OCI-LY7 (cell line): ENCODE measurements at regions of chr6 and their contacts with region 1.

Region 1: DNA sequence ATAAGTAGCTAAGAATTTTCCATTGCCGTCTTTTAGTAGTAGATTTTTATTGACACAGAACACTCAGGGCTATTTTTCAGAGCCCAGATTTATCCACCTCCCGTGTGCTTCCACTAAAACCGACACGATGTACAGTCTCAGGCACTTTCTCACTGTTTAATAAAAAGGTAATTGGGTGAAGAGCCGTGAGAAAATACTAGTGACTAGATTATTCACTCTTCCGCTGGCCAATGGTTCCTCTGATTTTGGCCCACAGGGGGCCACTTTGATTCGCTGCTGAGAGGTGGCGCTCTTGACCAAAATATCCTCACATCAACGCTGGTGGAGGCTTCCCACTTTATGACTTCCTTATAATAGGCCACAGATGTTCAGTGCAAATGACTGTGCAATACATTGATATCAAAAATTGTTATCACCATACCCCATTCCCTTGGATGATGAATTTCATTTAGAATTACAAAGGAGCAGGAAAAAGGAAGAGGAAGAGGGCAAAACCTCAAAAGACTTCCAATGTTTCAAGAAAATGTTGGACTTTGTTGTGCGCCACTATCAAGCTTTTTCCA is 12.3 kb upstream of the HDDC2 start:
- DNase-seq: peak; percentile 77
- H3K4me3 ChIP-seq: no peak overlapping the region
- H3K27ac ChIP-seq: no peak overlapping the region
- H3K4me1 ChIP-seq: no peaks in the 10 kb centered on the region
- CTCF ChIP-seq: peak; percentile 98

Region 2: DNA sequence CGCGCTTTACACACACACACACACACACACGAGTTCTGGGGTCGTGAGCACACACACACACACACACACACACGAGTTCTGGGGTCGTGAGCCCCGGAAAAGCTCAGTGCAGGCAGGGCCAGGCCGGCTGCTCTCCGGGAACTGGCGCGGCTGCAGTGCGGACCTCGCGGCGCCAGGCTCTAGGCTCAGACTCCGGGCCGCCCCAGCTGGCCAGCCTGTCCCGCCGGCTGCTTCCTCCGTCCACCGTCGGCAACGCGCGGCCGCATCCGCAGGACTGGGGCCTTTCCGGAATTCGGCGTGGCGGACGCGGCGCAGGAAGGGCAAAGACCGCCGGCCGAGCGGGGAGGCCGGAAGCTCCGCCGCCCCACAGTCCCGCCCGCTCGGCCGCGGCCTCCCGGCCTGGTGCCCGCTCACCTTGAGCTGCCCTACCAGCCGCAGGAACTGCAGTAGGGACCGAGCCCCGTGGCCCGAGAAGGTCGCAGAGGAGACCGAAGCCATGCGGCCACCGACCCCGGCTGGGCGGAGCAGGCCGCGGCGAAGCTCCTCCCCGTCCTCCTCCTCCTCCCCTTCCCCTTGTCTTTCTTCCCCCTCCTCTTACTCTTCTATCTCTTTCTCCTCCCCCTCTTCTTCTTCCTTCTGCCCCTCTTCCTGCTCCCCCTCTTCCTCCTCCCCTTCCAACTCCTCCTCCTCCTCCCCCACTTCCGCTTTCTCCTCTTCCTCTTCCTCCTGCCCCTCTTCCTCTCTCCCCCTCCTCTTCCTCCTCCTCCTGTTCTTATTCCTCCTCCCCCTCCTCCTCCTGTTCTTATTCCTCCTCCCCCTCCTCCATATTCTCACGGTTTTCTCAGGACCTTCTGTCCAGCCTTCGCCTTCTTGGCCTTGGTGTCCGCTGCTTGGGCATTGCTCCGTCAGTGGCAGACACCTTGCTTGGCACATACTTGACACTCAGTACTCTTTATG is 12.4 kb before region 1 on chr6 and contains the start of gene HDDC2:
- CTCF ChIA-PET with region 1: no interaction called
- POLR2A ChIA-PET with region 1: interaction called, 10 read pairs
- intact Hi-C with region 1: no loop called
- DNase-seq: peak; percentile 71
- H3K4me3 ChIP-seq: peak within 1 kb of the TSS; percentile 83
- H3K27ac ChIP-seq: peak within 1 kb of the TSS; percentile 52
- H3K4me1 ChIP-seq: peaks cover 29% of the 10 kb centered on the region
- CTCF ChIP-seq: no peak
- total RNA-seq, gene HDDC2: 75.1 and 88.6 TPM in 2 replicates

Region 3: DNA sequence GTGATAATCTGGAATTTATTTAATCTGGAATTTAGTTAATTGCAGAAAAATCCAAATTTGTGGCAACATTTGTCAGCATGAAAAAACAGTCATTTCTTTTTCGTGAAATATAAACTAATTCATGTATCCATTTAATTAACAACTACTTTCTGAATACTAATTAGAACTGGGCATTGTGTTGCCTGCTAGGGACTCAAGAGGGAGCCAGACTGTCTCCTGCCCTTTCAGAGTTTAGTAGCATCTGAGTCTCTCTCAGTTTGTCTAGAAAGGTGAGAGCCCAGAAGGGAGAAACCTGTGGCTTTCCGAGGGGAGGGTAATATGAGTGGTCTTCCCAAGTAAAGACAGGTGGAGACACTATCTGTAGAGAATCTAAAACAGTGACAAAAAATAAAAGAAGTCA is 198.5 kb after region 1 on chr6:
- CTCF ChIA-PET with region 1: no interaction called
- POLR2A ChIA-PET with region 1: no interaction called
- intact Hi-C with region 1: loop called (anchors 5 kb)
- DNase-seq: peak; percentile 23
- H3K4me3 ChIP-seq: no peak overlapping the region
- H3K27ac ChIP-seq: no peak overlapping the region
- H3K4me1 ChIP-seq: no peaks in the 10 kb centered on the region
- CTCF ChIP-seq: peak; percentile 68

Region 4: GRCh38 chr6:125749173-125749864 is 435.2 kb after region 1 on chr6 and contains the start of gene HEY2:
- CTCF ChIA-PET with region 1: interaction called, 3 read pairs
- POLR2A ChIA-PET with region 1: no interaction called
- intact Hi-C with region 1: loop called (anchors 1 kb)
- DNase-seq: peak; percentile 92
- H3K4me3 ChIP-seq: peak within 1 kb of the TSS; percentile 73
- H3K27ac ChIP-seq: no peak within 1 kb of the TSS
- H3K4me1 ChIP-seq: peaks cover 46% of the 10 kb centered on the region
- CTCF ChIP-seq: peak; percentile 29; the same call in 1 of the 2 replicates
- total RNA-seq, gene HEY2: 0.23 and 0.32 TPM in 2 replicates

Region 5: DNA sequence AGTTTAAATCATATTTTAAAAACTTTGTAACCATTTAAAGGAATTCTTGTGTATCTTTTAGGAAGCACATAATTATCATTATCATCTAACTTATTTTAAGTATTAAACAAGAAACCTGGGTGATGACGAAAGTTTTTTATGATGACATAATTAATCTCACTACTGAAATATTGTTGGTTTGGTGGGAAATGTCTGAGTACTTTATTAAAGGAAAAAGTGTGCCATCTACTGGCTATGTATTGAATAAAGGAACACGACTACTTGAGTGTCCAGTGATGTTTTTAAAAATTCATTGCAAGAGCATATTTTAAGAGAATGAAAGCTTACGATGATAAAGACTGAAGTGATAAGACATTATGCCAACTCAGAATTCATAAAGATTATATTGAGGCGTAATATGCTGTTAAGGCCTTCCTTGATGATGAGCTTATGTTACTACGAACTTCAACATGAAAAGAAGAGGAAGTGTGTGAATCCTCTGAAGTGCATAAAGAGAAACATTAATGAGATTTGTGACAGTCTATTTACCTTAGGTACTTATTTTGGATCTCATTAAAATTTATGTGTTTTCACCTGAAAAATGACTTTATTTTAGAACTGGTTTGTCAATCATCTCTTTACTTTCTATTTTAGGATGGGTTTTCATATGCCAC is 660.2 kb after region 1 on chr6:
- CTCF ChIA-PET with region 1: no interaction called
- POLR2A ChIA-PET with region 1: interaction called, 3 read pairs
- intact Hi-C with region 1: loop called (anchors 5 kb)
- DNase-seq: peak; percentile 76
- H3K4me3 ChIP-seq: no peak overlapping the region
- H3K27ac ChIP-seq: no peak overlapping the region
- H3K4me1 ChIP-seq: peaks cover 5% of the 10 kb centered on the region
- CTCF ChIP-seq: peak; percentile 92